Panc1 (cell line): ENCODE measurements at regions of chr15 and their contacts with region 1.

Region 1: GRCh38 chr15:92839696-92840095 is 60.4 kb upstream of the CHD2 start:
- DNase-seq: no peak
- ATAC-seq: peak; percentile 69; the same call in 1 of the 2 replicates
- H3K4me3 ChIP-seq: no peak overlapping the region
- H3K27ac ChIP-seq: peak overlapping the region; percentile 80
- H3K4me1 ChIP-seq: peaks cover 13% of the 10 kb centered on the region
- H3K27me3 ChIP-seq: no peaks in the 10 kb centered on the region
- CTCF ChIP-seq: no peak

Region 2: GRCh38 chr15:94403331-94403730 is 1563.6 kb after region 1 on chr15:
- CTCF ChIA-PET with region 1: no interaction called
- POLR2A ChIA-PET with region 1: interaction called, 10 read pairs
- in situ Hi-C with region 1: no loop called
- intact Hi-C with region 1: no loop called
- DNase-seq: no peak
- ATAC-seq: no peak
- H3K4me3 ChIP-seq: no peak overlapping the region
- H3K27ac ChIP-seq: no peak overlapping the region
- H3K4me1 ChIP-seq: no peaks in the 10 kb centered on the region
- H3K27me3 ChIP-seq: no peaks in the 10 kb centered on the region
- CTCF ChIP-seq: no peak